MCF 10A (cell line): ENCODE measurements at regions of chr3 and their contacts with region 1.

Region 1: DNA sequence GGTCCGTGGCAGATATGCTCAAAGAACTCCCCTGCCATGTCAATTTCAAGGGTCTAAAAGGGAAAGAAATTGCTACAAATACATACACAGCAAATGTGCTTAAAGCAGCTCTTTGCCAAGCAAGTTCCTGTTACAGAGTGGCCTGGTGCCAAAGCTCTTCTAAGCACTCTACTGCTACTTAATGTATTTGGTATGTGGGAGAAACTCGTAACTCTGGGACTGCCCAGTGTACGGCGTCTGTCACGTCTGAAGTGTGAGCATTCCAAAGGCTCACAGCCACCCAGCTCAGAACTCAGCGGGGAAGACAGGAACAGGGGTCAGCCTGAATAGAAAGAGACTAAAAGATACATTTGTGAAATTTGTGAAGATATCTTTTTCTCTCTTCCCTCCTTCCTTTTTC is 54.6 kb downstream of the RBMS3 start:
- DNase-seq: peak; percentile 95
- H3K4me3 Mint-ChIP-seq: peak overlapping the region; percentile 74
- H3K27ac Mint-ChIP-seq: peak overlapping the region; percentile 98
- H3K4me1 Mint-ChIP-seq: peaks cover 32% of the 10 kb centered on the region
- H3K27me3 Mint-ChIP-seq: no peaks in the 10 kb centered on the region
- CTCF ChIP-seq: no peak

Region 2: GRCh38 chr3:29183346-29184087 is 151.9 kb before region 1 on chr3:
- CTCF ChIA-PET with region 1: no interaction called
- POLR2A ChIA-PET with region 1: no interaction called
- intact Hi-C with region 1: no loop called
- DNase-seq: peak; percentile 53
- H3K4me3 Mint-ChIP-seq: no peak overlapping the region
- H3K27ac Mint-ChIP-seq: no peak overlapping the region
- H3K4me1 Mint-ChIP-seq: peaks cover 23% of the 10 kb centered on the region
- H3K27me3 Mint-ChIP-seq: no peaks in the 10 kb centered on the region
- CTCF ChIP-seq: no peak

Region 3: DNA sequence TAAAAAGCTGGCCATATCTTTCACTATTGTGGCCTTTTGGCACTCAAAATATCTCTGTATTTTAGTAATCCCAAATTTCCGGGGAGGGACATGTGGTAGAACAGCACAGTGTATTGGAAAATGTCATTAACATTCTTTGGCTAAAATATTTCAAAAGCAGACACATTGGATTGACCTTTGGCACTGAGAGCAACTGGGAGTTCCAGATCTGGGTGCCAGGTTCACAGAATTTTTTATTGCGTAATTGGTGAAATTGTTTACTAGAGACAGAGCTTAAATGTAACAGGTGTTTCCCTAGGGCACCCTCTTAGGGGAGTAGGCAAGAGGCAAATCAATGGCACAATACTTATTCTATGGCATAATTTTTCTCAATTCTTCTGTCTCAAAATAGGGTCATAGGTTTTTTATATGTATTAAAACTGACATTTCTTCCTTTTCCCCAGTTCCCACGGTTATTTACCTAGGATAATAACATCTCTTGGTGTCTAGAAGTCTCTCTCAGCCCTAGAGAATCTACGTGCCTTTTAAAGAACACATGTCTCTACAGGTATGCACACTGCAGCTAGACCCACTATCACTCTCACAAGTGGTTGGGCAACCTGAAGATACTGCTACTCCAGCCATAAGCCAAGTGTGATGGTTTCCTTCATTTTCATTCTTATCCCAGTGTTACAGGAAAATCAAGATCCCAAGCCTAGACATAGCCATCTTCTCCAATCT is 44.0 kb before region 1 on chr3:
- CTCF ChIA-PET with region 1: interaction called, 4 read pairs
- POLR2A ChIA-PET with region 1: interaction called, 184 read pairs
- intact Hi-C with region 1: loop called (anchors 2 kb)
- DNase-seq: peak; percentile 92
- H3K4me3 Mint-ChIP-seq: peak overlapping the region; percentile 6
- H3K27ac Mint-ChIP-seq: peak overlapping the region; percentile 85
- H3K4me1 Mint-ChIP-seq: peaks cover 49% of the 10 kb centered on the region
- H3K27me3 Mint-ChIP-seq: no peaks in the 10 kb centered on the region
- CTCF ChIP-seq: no peak

Region 4: GRCh38 chr3:29317659-29318173 is 17.7 kb before region 1 on chr3:
- CTCF ChIA-PET with region 1: interaction called, 6 read pairs
- POLR2A ChIA-PET with region 1: interaction called, 21 read pairs
- intact Hi-C with region 1: no loop called
- DNase-seq: no peak
- H3K4me3 Mint-ChIP-seq: no peak overlapping the region
- H3K27ac Mint-ChIP-seq: no peak overlapping the region
- H3K4me1 Mint-ChIP-seq: peaks cover 10% of the 10 kb centered on the region
- H3K27me3 Mint-ChIP-seq: no peaks in the 10 kb centered on the region
- CTCF ChIP-seq: no peak

Region 5: GRCh38 chr3:29324180-29324651 is 11.2 kb before region 1 on chr3:
- CTCF ChIA-PET with region 1: interaction called, 6 read pairs
- POLR2A ChIA-PET with region 1: interaction called, 21 read pairs
- intact Hi-C with region 1: no loop called
- DNase-seq: peak; percentile 27
- H3K4me3 Mint-ChIP-seq: peak overlapping the region; percentile 32
- H3K27ac Mint-ChIP-seq: peak overlapping the region; percentile 86
- H3K4me1 Mint-ChIP-seq: peaks cover 24% of the 10 kb centered on the region
- H3K27me3 Mint-ChIP-seq: no peaks in the 10 kb centered on the region
- CTCF ChIP-seq: no peak

Region 6: GRCh38 chr3:29384640-29385039 is 49.2 kb after region 1 on chr3:
- CTCF ChIA-PET with region 1: no interaction called
- POLR2A ChIA-PET with region 1: no interaction called
- intact Hi-C with region 1: no loop called
- DNase-seq: no peak
- H3K4me3 Mint-ChIP-seq: no peak overlapping the region
- H3K27ac Mint-ChIP-seq: no peak overlapping the region
- H3K4me1 Mint-ChIP-seq: peaks cover 4% of the 10 kb centered on the region
- H3K27me3 Mint-ChIP-seq: no peaks in the 10 kb centered on the region
- CTCF ChIP-seq: no peak

Region 7: DNA sequence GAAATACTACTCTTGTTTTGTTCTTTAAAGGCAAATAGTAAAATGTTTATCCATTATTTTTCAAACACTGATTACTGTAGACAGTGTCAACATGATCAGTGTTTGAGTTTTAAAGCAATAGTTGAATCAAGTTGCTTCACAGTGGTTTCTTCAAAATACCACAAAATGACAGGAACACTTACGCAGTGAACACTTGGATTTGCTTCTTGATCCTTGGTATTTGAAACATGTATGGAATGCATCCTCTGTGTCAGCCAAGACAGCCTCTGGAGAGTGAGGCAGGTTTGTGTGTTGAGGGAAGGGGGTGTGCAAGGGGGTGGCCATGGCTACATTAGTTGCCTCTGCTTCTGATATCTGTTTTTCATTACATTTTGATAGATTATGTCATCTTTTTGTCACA is 358.4 kb after region 1 on chr3:
- CTCF ChIA-PET with region 1: no interaction called
- POLR2A ChIA-PET with region 1: interaction called, 11 read pairs
- intact Hi-C with region 1: no loop called
- DNase-seq: peak; percentile 89
- H3K4me3 Mint-ChIP-seq: peak overlapping the region; percentile 43
- H3K27ac Mint-ChIP-seq: peak overlapping the region; percentile 91
- H3K4me1 Mint-ChIP-seq: peaks cover 44% of the 10 kb centered on the region
- H3K27me3 Mint-ChIP-seq: no peaks in the 10 kb centered on the region
- CTCF ChIP-seq: no peak